ENCODE measurements at regions of chr6 and their contacts with region 1.

Region 1: DNA sequence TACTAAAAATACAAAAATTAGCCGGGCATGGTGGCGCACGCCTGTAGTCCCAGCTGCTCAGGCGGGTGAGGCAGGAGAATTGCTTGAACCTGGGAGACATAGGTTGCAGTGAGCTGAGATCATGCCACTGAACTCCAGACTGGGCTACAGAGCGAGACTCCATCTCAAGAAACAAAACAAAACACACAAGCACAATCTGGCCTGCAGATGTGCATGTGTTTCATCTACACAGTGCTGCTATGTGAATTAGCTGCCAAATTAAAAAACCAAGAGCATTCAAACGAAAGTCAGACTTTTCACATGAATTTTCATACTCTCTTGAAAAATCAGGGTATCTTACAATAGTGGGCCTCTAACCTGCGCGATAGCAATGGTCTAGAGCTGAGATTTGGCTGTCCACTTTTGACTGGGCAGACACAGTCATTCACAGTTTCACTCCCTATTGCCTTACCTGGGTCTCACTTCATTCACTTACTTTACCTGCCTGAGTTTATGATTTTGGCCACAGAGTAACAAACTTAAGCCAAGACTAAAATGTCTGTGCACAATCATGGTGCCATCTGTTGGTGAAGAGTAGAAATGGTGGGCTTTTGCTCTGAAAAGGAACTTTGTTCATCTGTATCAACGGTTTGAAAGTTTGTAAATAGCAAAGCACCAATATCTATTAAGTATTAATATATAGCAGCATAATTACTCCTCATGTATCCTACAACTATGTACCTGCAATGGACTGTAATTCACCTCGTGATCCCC is 138.5 kb upstream of the UST start:
- DNase-seq: peak; percentile 30
- H3K4me3 ChIP-seq: no peak overlapping the region
- H3K27ac ChIP-seq: no peak overlapping the region
- H3K4me1 ChIP-seq: no peaks in the 10 kb centered on the region
- H3K27me3 ChIP-seq: peaks cover 2% of the 10 kb centered on the region
- CTCF ChIP-seq: peak; percentile 48 to 53

Region 2: GRCh38 chr6:148530394-148530953 is 77.9 kb before region 1 on chr6:
- CTCF ChIA-PET with region 1: no interaction called
- dilution Hi-C with region 1: no loop called
- in situ Hi-C with region 1: no loop called
- intact Hi-C with region 1: no loop called
- DNase-seq: no peak
- H3K4me3 ChIP-seq: no peak overlapping the region
- H3K27ac ChIP-seq: no peak overlapping the region
- H3K4me1 ChIP-seq: no peaks in the 10 kb centered on the region
- H3K27me3 ChIP-seq: no peaks in the 10 kb centered on the region
- CTCF ChIP-seq: no peak

Region 3: GRCh38 chr6:148559848-148560433 is 48.4 kb before region 1 on chr6:
- CTCF ChIA-PET with region 1: no interaction called
- dilution Hi-C with region 1: no loop called
- in situ Hi-C with region 1: no loop called
- intact Hi-C with region 1: loop called (anchors 1 kb)
- DNase-seq: peak; percentile 35
- H3K4me3 ChIP-seq: peak overlapping the region in 2 of 3 experiments; percentile 38 to 45
- H3K27ac ChIP-seq: no peak overlapping the region
- H3K4me1 ChIP-seq: peaks cover 5% of the 10 kb centered on the region
- H3K27me3 ChIP-seq: no peaks in the 10 kb centered on the region
- CTCF ChIP-seq: peak; percentile 86 to 89